MCF 10A (cell line): ENCODE measurements at regions of chr16 and their contacts with region 1.

Region 1: GRCh38 chr16:50665128-50665878 is 15.8 kb downstream of the SNX20 start:
- DNase-seq: peak; percentile 69
- H3K4me3 Mint-ChIP-seq: peak overlapping the region; percentile 62
- H3K27ac Mint-ChIP-seq: peak overlapping the region; percentile 39
- H3K4me1 Mint-ChIP-seq: no peaks in the 10 kb centered on the region
- H3K27me3 Mint-ChIP-seq: no peaks in the 10 kb centered on the region
- CTCF ChIP-seq: peak; percentile 83

Region 2: GRCh38 chr16:50210266-50211038 is 454.9 kb before region 1 on chr16:
- CTCF ChIA-PET with region 1: interaction called, 9 read pairs
- POLR2A ChIA-PET with region 1: no interaction called
- intact Hi-C with region 1: loop called (anchors 1 kb)
- DNase-seq: peak; percentile 72
- H3K4me3 Mint-ChIP-seq: no peak overlapping the region
- H3K27ac Mint-ChIP-seq: peak overlapping the region; percentile 65
- H3K4me1 Mint-ChIP-seq: peaks cover 32% of the 10 kb centered on the region
- H3K27me3 Mint-ChIP-seq: no peaks in the 10 kb centered on the region
- CTCF ChIP-seq: peak; percentile 68

Region 3: DNA sequence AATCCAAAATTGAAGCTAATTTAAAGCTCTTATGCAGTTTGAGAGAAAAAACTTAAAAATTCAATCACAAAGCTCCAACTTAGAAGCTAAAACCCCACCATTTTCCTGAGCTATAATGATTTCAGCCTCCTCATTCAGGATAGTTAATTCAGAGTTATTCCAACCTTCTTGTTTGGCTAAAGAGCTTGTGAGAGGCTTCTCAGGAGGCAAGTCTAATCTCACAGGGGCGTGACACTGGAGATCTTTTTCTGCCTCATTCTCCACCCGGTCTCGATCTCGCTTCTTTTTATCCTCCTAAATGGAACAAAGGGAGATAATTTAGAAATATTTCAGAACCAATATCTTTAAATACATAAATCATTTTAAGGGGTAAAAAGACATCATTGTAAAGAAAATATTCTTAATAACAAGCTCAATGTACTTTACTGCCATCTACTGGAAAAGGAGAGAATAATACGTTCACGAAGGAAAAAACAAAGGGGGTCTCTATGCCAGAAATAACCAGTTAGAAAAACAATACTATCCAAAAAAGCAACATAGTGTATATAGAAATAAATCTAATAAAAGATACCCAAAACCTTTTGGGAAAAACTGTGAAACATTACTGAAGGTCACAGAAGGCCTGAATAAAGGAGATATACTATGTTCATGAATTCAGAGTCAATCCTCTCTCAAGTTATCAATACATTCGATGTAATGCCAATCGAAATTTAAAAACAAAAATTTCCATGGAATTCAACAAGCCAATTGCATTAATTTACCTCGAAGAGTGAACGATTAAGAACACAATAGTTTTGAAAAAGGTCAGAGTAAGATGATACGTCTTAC is 310.5 kb before region 1 on chr16:
- CTCF ChIA-PET with region 1: interaction called, 72 read pairs
- POLR2A ChIA-PET with region 1: interaction called, 5 read pairs
- intact Hi-C with region 1: no loop called
- DNase-seq: no peak
- H3K4me3 Mint-ChIP-seq: no peak overlapping the region
- H3K27ac Mint-ChIP-seq: no peak overlapping the region
- H3K4me1 Mint-ChIP-seq: peaks cover 5% of the 10 kb centered on the region
- H3K27me3 Mint-ChIP-seq: no peaks in the 10 kb centered on the region
- CTCF ChIP-seq: peak; percentile 49

Region 4: GRCh38 chr16:50368410-50369132 is 296.7 kb before region 1 on chr16 and contains the start of gene BRD7:
- CTCF ChIA-PET with region 1: interaction called, 212 read pairs
- POLR2A ChIA-PET with region 1: interaction called, 5 read pairs
- intact Hi-C with region 1: no loop called
- DNase-seq: peak; percentile 51
- H3K4me3 Mint-ChIP-seq: peak within 1 kb of the TSS; percentile 84
- H3K27ac Mint-ChIP-seq: peak within 1 kb of the TSS; percentile 83
- H3K4me1 Mint-ChIP-seq: peaks cover 33% of the 10 kb centered on the region
- H3K27me3 Mint-ChIP-seq: no peaks in the 10 kb centered on the region
- CTCF ChIP-seq: peak; percentile 32
- total RNA-seq, gene BRD7: 75.9 and 76.4 TPM in 2 replicates

Region 5: GRCh38 chr16:50384500-50385135 is 280.7 kb before region 1 on chr16:
- CTCF ChIA-PET with region 1: interaction called, 10 read pairs
- POLR2A ChIA-PET with region 1: no interaction called
- intact Hi-C with region 1: no loop called
- DNase-seq: no peak
- H3K4me3 Mint-ChIP-seq: no peak overlapping the region
- H3K27ac Mint-ChIP-seq: no peak overlapping the region
- H3K4me1 Mint-ChIP-seq: no peaks in the 10 kb centered on the region
- H3K27me3 Mint-ChIP-seq: no peaks in the 10 kb centered on the region
- CTCF ChIP-seq: no peak

Region 6: GRCh38 chr16:50681021-50681885 is 15.9 kb after region 1 on chr16 and contains the start of gene SNX20:
- CTCF ChIA-PET with region 1: interaction called, 98 read pairs
- POLR2A ChIA-PET with region 1: no interaction called
- intact Hi-C with region 1: no loop called
- DNase-seq: no peak
- H3K4me3 Mint-ChIP-seq: no peak within 1 kb of the TSS
- H3K27ac Mint-ChIP-seq: no peak within 1 kb of the TSS
- H3K4me1 Mint-ChIP-seq: no peaks in the 10 kb centered on the region
- H3K27me3 Mint-ChIP-seq: no peaks in the 10 kb centered on the region
- CTCF ChIP-seq: no peak
- total RNA-seq, gene SNX20: not detected in 2 replicates

Region 7: DNA sequence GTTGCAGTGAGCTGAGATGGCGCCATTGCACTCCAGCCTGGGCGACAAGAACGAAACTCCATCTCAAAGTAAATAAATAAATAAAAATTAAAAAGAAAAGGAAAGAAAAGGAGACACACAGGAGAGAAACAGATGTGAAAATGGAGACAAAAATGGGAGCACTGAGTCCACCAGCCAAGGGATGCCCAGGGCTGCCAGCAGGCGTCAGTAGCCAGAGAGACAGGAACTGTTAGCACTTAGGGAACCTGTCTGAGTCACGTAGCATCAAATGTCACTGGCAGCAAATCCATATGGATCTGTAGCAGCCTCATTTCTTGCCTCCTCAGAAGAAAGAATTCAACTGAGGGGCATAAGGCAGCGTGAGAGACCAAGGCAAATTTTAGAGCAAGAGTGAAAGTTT is 156.3 kb after region 1 on chr16:
- CTCF ChIA-PET with region 1: no interaction called
- POLR2A ChIA-PET with region 1: no interaction called
- intact Hi-C with region 1: no loop called
- DNase-seq: peak; percentile 70
- H3K4me3 Mint-ChIP-seq: no peak overlapping the region
- H3K27ac Mint-ChIP-seq: no peak overlapping the region
- H3K4me1 Mint-ChIP-seq: no peaks in the 10 kb centered on the region
- H3K27me3 Mint-ChIP-seq: no peaks in the 10 kb centered on the region
- CTCF ChIP-seq: no peak